Activated CD4-positive, alpha-beta memory T cell treated with anti-CD3 and anti-CD28 coated beads for 36 hours (primary cell): ENCODE measurements at regions of chr4 and their contacts with region 1.

Region 1: GRCh38 chr4:55321707-55322264 is 24.3 kb upstream of the SRD5A3 start:
- DNase-seq: peak; percentile 72
- H3K4me3 Mint-ChIP-seq: no peak overlapping the region
- H3K27ac Mint-ChIP-seq: no peak overlapping the region
- H3K4me1 Mint-ChIP-seq: peaks cover 29% of the 10 kb centered on the region
- H3K27me3 Mint-ChIP-seq: peaks cover 2% of the 10 kb centered on the region

Region 2: GRCh38 chr4:54683616-54684346 is 638.0 kb before region 1 on chr4:
- CTCF ChIA-PET with region 1: interaction called, 4 read pairs
- POLR2A ChIA-PET with region 1: no interaction called
- intact Hi-C with region 1: loop called (anchors 5 kb)
- DNase-seq: peak; percentile 70
- H3K4me3 Mint-ChIP-seq: no peak overlapping the region
- H3K27ac Mint-ChIP-seq: no peak overlapping the region
- H3K4me1 Mint-ChIP-seq: peaks cover 15% of the 10 kb centered on the region
- H3K27me3 Mint-ChIP-seq: no peaks in the 10 kb centered on the region

Region 3: GRCh38 chr4:55184600-55185523 is 136.9 kb before region 1 on chr4:
- CTCF ChIA-PET with region 1: interaction called, 20 read pairs
- POLR2A ChIA-PET with region 1: no interaction called
- intact Hi-C with region 1: loop called (anchors 1 kb)
- DNase-seq: peak; percentile 25
- H3K4me3 Mint-ChIP-seq: no peak overlapping the region
- H3K27ac Mint-ChIP-seq: no peak overlapping the region
- H3K4me1 Mint-ChIP-seq: no peaks in the 10 kb centered on the region
- H3K27me3 Mint-ChIP-seq: peaks cover 7% of the 10 kb centered on the region

Region 4: GRCh38 chr4:55355555-55355954 is 33.8 kb after region 1 on chr4:
- CTCF ChIA-PET with region 1: no interaction called
- POLR2A ChIA-PET with region 1: no interaction called
- intact Hi-C with region 1: no loop called
- DNase-seq: no peak
- H3K4me3 Mint-ChIP-seq: no peak overlapping the region
- H3K27ac Mint-ChIP-seq: no peak overlapping the region
- H3K4me1 Mint-ChIP-seq: peaks cover 15% of the 10 kb centered on the region
- H3K27me3 Mint-ChIP-seq: no peaks in the 10 kb centered on the region